Motor neuron (in vitro differentiated cells): ENCODE measurements at regions of chr5 and their contacts with region 1.

Region 1: DNA sequence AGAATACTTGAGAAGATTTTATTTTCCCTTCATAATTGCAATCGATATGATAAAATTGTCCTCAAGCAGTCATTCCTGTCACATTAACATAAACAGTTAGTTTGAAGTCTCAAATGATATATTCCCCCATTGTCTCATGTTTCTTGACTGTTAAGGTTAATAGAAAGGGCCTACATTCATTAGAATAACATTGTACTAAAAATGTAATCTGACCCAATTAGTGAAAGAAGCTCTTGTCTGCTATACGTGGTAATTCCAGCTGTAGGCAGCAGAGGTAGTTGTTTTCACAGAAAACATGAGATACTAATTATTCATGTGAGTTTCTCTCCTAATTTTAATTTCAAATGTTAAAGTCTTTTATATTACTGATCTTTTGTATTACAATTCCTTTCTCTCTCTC is 25.9 kb upstream of the AP3B1 start:
- ATAC-seq: peak in 3 of 8 experiments; percentile 60 to 74 (median 66)
- H3K4me3 ChIP-seq: no peak overlapping the region
- H3K27ac ChIP-seq: no peak overlapping the region
- H3K4me1 ChIP-seq: peaks cover 0 to 4% of the 10 kb centered on the region in 2 donors

Region 2: GRCh38 chr5:78467752-78468357 is 147.5 kb after region 1 on chr5:
- in situ Hi-C with region 1: loop called in 1 of 9 experiments (anchors 25 kb)
- ATAC-seq: peak in 5 of 8 experiments; percentile 27 to 64 (median 49)
- H3K4me3 ChIP-seq: no peak overlapping the region
- H3K27ac ChIP-seq: no peak overlapping the region
- H3K4me1 ChIP-seq: no peaks in the 10 kb centered on the region